ENCODE measurements at regions of chr2 and their contacts with region 1.

Region 1: GRCh38 chr2:175187378-175187777 is 5.9 kb upstream of the ATP5MC3 start:
- DNase-seq: peak; percentile 45 to 59
- H3K4me3 ChIP-seq: no peak overlapping the region
- H3K4me3 Mint-ChIP-seq: no peak overlapping the region
- H3K27ac Mint-ChIP-seq: no peak overlapping the region
- H3K4me1 ChIP-seq: no peaks in the 10 kb centered on the region
- H3K4me1 Mint-ChIP-seq: no peaks in the 10 kb centered on the region
- H3K27me3 ChIP-seq: no peaks in the 10 kb centered on the region
- H3K27me3 Mint-ChIP-seq: no peaks in the 10 kb centered on the region
- CTCF ChIP-seq: peak; percentile 16 to 64

Region 2: DNA sequence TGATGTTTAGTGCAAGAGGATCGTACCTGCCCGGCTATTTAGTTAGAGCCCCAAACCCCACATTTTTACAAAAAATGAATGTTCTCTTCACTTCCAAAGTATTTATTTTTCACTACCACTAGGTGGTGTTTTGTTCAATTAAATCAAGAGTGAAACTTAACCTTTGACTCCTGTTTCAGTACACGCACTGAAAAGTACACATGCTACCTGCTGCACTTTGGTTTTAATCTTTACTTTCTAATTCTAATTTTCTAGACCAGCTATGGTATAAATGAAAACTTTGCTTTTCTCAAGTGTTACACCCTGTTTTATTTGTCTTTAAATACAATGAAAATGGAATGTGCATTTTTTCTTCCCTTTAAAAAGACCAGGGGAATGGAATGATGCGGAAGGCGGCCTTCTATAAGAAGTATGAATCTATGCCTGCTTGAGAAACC is 150.8 kb before region 1 on chr2:
- CTCF ChIA-PET with region 1: no interaction called
- POLR2A ChIA-PET with region 1: no interaction called
- intact Hi-C with region 1: loop called (anchors 1 kb)
- DNase-seq: no peak
- H3K4me3 ChIP-seq: no peak overlapping the region
- H3K4me3 Mint-ChIP-seq: no peak overlapping the region
- H3K27ac Mint-ChIP-seq: no peak overlapping the region
- H3K4me1 ChIP-seq: peaks cover 6% of the 10 kb centered on the region; the same call in 1 of the 2 replicates
- H3K4me1 Mint-ChIP-seq: peaks cover 14% of the 10 kb centered on the region
- H3K27me3 ChIP-seq: no peaks in the 10 kb centered on the region
- H3K27me3 Mint-ChIP-seq: no peaks in the 10 kb centered on the region
- CTCF ChIP-seq: peak; percentile 34 to 55

Region 3: GRCh38 chr2:175048275-175048674 is 139.1 kb before region 1 on chr2:
- CTCF ChIA-PET with region 1: no interaction called
- POLR2A ChIA-PET with region 1: no interaction called
- intact Hi-C with region 1: no loop called
- DNase-seq: no peak
- H3K4me3 ChIP-seq: no peak overlapping the region
- H3K4me3 Mint-ChIP-seq: no peak overlapping the region
- H3K27ac Mint-ChIP-seq: no peak overlapping the region
- H3K4me1 ChIP-seq: no peaks in the 10 kb centered on the region
- H3K4me1 Mint-ChIP-seq: no peaks in the 10 kb centered on the region
- H3K27me3 ChIP-seq: no peaks in the 10 kb centered on the region
- H3K27me3 Mint-ChIP-seq: peaks cover 3% of the 10 kb centered on the region
- CTCF ChIP-seq: no peak

Region 4: DNA sequence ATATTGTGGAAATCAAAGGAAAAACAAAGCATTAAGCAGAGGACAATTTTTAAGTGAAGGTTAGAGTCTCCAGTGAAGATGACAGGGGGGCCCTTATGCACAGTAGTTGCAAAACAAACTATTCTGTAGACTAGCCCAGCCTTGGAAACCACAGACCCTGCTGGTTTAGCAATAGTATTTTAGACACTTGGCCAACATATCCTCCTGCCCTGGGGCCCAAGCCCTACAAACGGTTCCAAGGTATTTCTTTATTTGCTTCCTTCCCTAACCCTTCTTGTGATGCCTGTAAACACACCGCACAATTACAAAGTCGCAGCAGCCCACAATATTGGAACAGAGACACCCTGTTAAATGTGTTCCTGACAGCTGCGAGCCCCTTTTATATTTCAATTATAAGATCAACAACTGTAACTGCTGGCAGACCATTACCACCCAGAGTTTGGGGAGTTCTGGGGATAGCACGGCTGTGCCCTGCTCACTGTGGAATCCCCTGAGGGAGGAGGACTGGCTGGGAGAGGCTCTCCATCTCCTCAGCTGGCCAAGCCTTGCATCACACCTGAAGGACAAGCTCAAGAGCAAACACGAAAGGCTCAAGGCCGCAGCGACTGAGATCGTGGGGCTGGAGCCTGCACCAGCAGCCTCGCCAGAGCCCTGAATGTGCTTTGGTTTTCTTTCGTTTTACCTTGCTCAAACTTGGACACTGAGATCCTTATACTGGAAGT is 276.4 kb after region 1 on chr2:
- CTCF ChIA-PET with region 1: no interaction called
- POLR2A ChIA-PET with region 1: no interaction called
- intact Hi-C with region 1: no loop called
- DNase-seq: no peak
- H3K4me3 ChIP-seq: no peak overlapping the region
- H3K4me3 Mint-ChIP-seq: no peak overlapping the region
- H3K27ac Mint-ChIP-seq: no peak overlapping the region
- H3K4me1 ChIP-seq: no peaks in the 10 kb centered on the region
- H3K4me1 Mint-ChIP-seq: no peaks in the 10 kb centered on the region
- H3K27me3 ChIP-seq: no peaks in the 10 kb centered on the region
- H3K27me3 Mint-ChIP-seq: no peaks in the 10 kb centered on the region
- CTCF ChIP-seq: no peak